Posterior vena cava (tissue), 2 donors: ENCODE measurements at regions of chr4 and their contacts with region 1.

Region 1: DNA sequence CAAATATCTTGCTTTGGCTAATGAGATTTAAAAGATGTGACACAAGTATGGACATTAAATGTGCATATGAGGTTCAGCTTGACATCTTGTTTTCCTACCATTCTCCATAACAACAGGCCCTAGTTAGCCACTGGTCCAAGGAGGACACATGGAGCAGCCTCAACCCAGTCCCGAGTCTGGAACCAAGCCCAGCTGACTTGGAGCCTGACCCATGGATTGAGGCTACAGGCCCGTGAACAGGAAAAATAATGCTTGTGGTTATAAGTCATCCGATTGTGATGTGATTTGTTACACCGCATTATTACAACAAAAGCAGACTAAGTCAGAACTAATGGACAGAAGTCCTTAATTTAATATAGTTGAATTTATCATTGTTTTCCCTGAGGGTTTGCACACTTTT is 123.2 kb upstream of the BANK1 start:
- DNase-seq: no peak

Region 2: DNA sequence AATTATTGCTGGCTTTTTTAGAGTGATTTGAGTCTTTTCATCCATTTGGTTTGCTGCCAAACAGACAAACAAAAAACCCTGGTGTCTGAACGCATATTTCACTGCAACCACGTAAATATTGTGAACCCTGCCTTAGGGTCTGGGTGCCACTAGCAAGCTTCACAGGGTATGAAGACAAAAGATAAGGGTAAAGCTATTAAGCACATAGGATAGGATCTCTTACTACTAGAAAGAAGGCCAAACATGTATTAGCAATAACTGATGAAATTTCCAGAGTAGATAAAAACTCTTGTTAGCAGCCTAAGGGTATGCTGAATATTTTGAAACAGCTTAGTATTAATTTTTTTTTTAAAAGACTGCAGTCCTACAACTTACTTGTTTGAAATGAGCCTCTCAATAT is 266.6 kb after region 1 on chr4:
- intact Hi-C with region 1: no loop called
- DNase-seq: no peak

Region 3: DNA sequence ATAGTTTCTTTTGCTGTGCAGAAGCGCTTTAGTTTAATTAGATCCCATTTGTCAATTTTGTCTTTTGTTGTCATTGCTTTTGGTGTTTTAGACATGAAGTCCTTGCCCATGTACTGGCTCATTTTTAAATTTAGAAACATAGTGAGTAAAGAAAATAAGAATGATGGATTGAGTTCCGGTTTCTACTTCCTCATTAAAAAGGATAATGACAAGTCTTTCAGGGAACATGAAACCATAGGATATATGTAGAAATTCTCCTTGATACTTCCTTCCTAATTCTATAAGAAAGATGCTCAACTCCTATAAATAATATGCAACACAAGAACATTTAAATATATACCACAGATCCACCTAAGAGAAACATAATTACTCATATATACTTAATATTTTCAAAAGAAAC is 364.1 kb after region 1 on chr4:
- intact Hi-C with region 1: loop called in 1 of 2 experiments (anchors 5 kb)
- DNase-seq: no peak